CD14-positive monocyte (primary cell): ENCODE measurements at regions of chr19 and their contacts with region 1.

Region 1: DNA sequence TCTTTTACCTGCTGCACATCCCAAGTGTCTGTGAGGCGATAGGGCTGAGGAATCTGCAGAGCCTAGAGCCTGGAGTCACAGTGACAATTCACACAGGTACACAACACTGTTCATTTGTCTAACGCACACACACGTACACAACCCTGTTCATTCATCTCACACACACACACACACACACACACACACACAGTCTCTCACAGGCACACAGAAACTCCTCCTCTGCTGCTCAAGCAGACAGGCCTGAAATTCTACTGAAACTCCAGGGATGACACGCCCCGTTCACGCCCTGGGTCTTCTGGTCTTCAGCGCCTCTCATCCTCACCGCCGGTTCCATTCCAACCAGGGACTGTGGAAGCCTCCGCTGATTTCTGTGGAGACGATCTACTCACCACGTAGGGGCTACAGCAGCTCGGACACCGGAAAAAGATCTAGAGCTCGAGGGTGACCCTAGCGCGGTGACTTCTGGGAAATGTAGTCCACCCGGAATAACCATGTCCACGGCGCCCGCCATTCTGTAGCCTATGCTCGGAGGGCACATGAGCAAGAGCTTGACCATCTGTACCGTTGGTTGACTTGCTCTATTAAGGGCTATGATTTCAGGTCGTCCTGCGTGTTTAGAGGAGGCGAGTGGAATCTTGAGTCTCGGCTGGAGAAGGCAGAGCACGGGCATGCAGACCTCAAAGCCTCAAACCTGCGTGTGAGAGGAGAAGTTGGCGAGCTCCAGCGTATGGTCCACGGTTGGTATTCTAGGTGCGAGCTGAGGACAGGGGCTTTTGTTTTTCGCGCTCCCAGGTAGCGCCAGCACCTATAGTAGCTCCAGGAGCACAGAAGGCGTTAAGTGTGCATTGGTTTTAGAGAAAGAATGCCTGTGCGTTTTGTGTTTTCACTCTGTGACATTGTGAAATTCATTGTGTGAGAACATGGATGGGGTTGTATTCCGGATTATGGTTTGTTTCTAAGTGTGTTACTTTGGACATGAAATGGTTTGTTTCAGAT is 33.4 kb downstream of the ZNF45 start:
- DNase-seq: peak; percentile 51 to 72 (median 69)
- H3K4me3 ChIP-seq: peak overlapping the region; percentile 47 to 85 (median 82)
- H3K4me3 Mint-ChIP-seq: peak overlapping the region; percentile 90 to 97
- H3K27ac ChIP-seq: peak overlapping the region in 1 of 2 donors; percentile 57
- H3K27ac Mint-ChIP-seq: peak overlapping the region in 6 of 7 donors; percentile 44 to 85 (median 78)
- H3K4me1 ChIP-seq: peaks cover 12 to 13% of the 10 kb centered on the region in 2 donors
- H3K4me1 Mint-ChIP-seq: peaks cover 16% of the 10 kb centered on the region
- H3K27me3 ChIP-seq: no peaks in the 10 kb centered on the region
- H3K27me3 Mint-ChIP-seq: peaks cover 0 to 2% (median 1%) of the 10 kb centered on the region in 3 donors
- CTCF ChIP-seq: no peak

Region 2: GRCh38 chr19:43950834-43951645 is 49.3 kb after region 1 on chr19 and contains the start of gene ZNF221:
- intact Hi-C with region 1: loop called in 1 of 2 experiments (anchors 5 kb)
- DNase-seq: peak; percentile 90 to 98 (median 92)
- H3K4me3 ChIP-seq: peak within 1 kb of the TSS; percentile 61 to 95 (median 84)
- H3K4me3 Mint-ChIP-seq: peak within 1 kb of the TSS; percentile 97 to 100
- H3K27ac ChIP-seq: peak within 1 kb of the TSS in 1 of 2 donors; percentile 58
- H3K27ac Mint-ChIP-seq: peak within 1 kb of the TSS; percentile 72 to 90 (median 86)
- H3K4me1 ChIP-seq: peaks cover 5 to 8% of the 10 kb centered on the region in 2 donors
- H3K4me1 Mint-ChIP-seq: peaks cover 10% of the 10 kb centered on the region
- H3K27me3 ChIP-seq: no peaks in the 10 kb centered on the region
- H3K27me3 Mint-ChIP-seq: peaks cover under 1 to 7% (median 3%) of the 10 kb centered on the region in 3 donors
- CTCF ChIP-seq: no peak
- polyA plus RNA-seq, gene ZNF221: 0.13 to 0.29 TPM in 2 of 3 donors, not detected in the other